Endothelial cell of umbilical vein (primary cell): ENCODE measurements at regions of chr19 and their contacts with region 1.

Region 1: DNA sequence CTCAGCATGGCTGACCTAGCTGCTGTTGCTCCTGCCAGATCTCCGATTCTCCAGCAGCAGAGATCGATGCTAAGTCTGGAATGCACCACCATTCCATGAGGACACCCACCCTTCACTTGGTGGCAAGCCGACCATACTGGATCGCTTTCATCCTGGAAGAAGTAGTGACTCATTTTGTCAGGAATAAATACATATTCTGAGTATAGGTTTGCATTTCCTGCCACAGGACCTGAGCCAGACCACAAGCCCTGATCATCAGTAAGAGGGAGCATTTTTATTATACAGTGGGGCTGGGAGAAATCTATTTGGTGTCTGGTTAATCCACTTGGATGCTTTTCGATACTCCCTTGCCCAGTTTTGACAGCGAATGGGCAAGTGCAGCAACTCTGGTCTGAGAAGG is 10.9 kb upstream of the KCTD15 start:
- DNase-seq: no peak
- H3K4me3 ChIP-seq: no peak overlapping the region
- H3K27ac ChIP-seq: no peak overlapping the region
- H3K4me1 ChIP-seq: peaks cover 14% of the 10 kb centered on the region
- H3K27me3 ChIP-seq: peaks cover 0 to 5% of the 10 kb centered on the region in 2 experiments
- CTCF ChIP-seq: no peak
- POLR2A ChIP-seq: no peak

Region 2: GRCh38 chr19:33804021-33804799 is 18.4 kb after region 1 on chr19:
- CTCF ChIA-PET with region 1: no interaction called
- POLR2A ChIA-PET with region 1: no interaction called
- dilution Hi-C with region 1: no loop called
- intact Hi-C with region 1: no loop called
- DNase-seq: no peak
- H3K4me3 ChIP-seq: no peak overlapping the region
- H3K27ac ChIP-seq: no peak overlapping the region
- H3K4me1 ChIP-seq: peaks cover under 1% of the 10 kb centered on the region
- H3K27me3 ChIP-seq: no peaks in the 10 kb centered on the region
- CTCF ChIP-seq: no peak
- POLR2A ChIP-seq: no peak

Region 3: DNA sequence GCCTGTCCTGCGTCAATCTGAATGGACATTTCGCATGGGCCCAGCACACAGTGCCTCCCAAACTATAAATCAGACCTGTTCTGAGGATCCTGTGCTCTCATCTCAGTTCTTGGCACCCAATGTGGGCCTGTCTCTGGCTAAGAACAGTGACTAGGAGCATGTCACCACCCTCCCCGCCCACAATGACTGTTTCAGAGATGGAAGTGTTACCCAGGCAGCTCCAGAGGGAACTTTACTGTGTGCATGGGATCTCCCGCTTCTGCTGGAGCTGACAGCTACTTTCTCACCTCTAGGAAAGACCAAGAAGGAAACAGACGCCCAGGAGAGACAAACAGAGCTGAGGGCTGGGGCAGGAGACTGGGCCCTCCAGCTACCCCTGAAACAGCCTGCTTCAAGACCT is 55.9 kb after region 1 on chr19:
- CTCF ChIA-PET with region 1: no interaction called
- POLR2A ChIA-PET with region 1: no interaction called
- dilution Hi-C with region 1: no loop called
- intact Hi-C with region 1: no loop called
- DNase-seq: no peak
- H3K4me3 ChIP-seq: no peak overlapping the region
- H3K27ac ChIP-seq: no peak overlapping the region
- H3K4me1 ChIP-seq: no peaks in the 10 kb centered on the region
- H3K27me3 ChIP-seq: no peaks in the 10 kb centered on the region
- CTCF ChIP-seq: no peak
- POLR2A ChIP-seq: no peak

Region 4: GRCh38 chr19:33998739-33999345 is 213.0 kb after region 1 on chr19:
- CTCF ChIA-PET with region 1: interaction called, 219 read pairs
- POLR2A ChIA-PET with region 1: no interaction called
- dilution Hi-C with region 1: no loop called
- intact Hi-C with region 1: no loop called
- DNase-seq: peak; percentile 21
- H3K4me3 ChIP-seq: no peak overlapping the region
- H3K27ac ChIP-seq: no peak overlapping the region
- H3K4me1 ChIP-seq: no peaks in the 10 kb centered on the region
- H3K27me3 ChIP-seq: peaks cover 3 to 6% of the 10 kb centered on the region in 2 experiments
- CTCF ChIP-seq: peak; percentile 11 to 17
- POLR2A ChIP-seq: no peak